ENCODE measurements at regions of chr12 and their contacts with region 1.

Region 1: DNA sequence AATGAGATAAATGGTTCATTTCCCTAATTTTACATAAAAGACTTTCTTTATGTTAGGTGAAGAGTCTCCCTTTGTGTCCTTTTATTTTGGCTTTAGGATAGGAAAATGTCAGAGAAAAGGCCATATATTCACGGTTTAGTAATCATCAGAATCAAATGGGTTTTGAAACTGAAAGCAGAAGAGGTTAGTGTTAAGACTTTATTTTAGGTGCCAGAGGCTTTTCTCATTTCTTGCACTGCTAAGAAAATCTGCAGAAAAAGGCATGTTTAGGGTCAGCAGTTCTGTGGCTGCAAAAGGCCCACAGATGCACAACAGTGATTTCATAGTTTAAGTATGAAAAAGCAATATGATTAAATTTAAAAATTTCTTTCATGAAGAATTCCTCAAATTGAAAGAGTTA is 80.4 kb upstream of the SINHCAF start:
- DNase-seq: no peak
- ATAC-seq: no peak

Region 2: DNA sequence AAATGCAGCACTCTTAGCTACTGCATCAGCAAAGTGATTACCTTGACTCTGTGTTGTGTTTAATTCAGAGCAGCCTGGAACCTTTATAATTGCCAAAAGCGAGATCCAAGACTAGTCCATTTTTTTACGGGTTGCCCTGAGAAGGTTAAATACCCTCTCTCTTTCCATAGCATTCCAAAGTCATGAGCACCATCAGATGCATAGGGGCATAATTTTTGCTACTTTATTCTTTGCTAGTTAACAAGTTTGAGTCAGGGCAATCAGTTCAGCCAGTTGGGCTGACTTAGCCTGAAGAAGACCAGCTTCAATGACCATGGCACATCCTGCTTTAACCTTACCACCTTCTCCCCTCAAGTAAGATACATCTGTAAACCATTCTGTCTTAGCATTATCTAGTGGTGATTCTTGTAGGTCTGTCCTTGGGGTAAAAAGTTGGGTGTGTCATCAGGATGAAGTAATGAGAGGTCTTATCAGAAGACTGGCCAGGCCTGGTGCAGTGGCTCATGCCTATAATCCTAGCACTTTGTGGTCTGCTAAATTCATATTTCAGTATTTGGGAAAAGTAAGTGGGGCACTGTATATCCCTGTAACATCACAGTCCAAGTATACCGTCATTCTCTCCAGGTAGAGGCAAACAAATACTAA is 99.6 kb before region 1 on chr12:
- intact Hi-C with region 1: no loop called
- DNase-seq: no peak
- ATAC-seq: no peak

Region 3: GRCh38 chr12:31631784-31632183 is 225.4 kb after region 1 on chr12:
- intact Hi-C with region 1: loop called (anchors 2 kb)
- DNase-seq: no peak
- ATAC-seq: no peak

Measured in left ventricle myocardium superior (tissue), 1 donor.